ENCODE measurements at regions of chr3 and their contacts with region 1.

Region 1: DNA sequence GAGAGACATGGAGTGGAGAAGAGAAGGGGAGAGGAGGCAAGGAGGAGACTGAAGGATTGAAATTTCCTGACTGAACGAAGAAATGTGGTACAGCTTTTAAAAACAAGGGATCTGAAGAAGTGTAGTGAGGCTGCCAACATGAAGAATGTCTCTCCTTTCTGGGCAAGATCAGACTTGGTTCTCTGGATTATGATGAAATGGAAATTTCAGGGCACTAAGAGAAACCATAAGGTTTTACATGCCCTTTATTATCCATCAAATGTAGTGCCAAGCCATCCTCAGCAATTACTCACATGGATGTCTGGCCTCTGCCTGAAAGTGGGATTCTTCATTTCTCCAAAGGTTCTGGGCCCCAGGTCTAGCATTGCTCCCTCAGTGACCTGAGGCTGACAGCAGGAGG is 77.6 kb upstream of the CCDC80 start:
- DNase-seq: no peak
- H3K4me3 ChIP-seq: no peak overlapping the region
- H3K27ac ChIP-seq: no peak overlapping the region
- H3K4me1 ChIP-seq: no peaks in the 10 kb centered on the region
- H3K27me3 ChIP-seq: no peaks in the 10 kb centered on the region
- CTCF ChIP-seq: no peak
- POLR2A ChIP-seq: no peak

Region 2: DNA sequence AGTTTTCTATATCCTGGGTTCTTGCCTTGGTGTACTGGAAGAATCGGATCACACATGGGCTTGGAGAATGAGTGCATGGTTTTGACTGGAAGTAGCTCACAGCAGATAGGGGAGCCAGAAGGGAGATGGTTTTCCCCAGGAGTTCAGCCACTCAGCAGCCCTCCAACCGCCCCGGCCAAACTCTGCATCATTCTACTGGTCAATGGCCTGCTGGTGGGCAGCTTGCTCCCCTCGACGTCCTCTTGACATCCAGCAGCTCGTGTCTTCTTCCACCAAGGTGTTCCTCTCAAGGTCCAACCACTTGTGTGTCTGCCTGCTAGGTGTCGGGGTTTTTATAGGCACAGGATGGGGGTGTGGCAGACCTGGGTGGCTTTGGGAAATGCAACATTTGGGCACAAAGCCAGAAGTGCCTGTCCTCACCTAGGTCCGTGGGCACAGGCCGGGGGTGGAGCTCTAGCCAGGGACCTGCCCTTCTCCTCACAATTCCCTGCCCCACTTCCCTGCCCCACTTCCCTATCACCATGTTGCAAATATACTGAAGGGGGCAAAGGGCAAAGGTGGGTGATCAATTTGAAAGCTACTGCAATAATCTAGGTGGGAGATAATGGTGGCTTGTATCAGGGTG is 269.3 kb after region 1 on chr3:
- intact Hi-C with region 1: loop called (anchors 5 kb)
- DNase-seq: no peak
- H3K4me3 ChIP-seq: no peak overlapping the region
- H3K27ac ChIP-seq: no peak overlapping the region
- H3K4me1 ChIP-seq: peaks cover 0 to 9% of the 10 kb centered on the region in 2 donors
- H3K27me3 ChIP-seq: no peaks in the 10 kb centered on the region
- CTCF ChIP-seq: no peak
- POLR2A ChIP-seq: no peak

Region 3: GRCh38 chr3:113812854-113813253 is 1094.3 kb after region 1 on chr3:
- intact Hi-C with region 1: no loop called
- DNase-seq: no peak
- H3K4me3 ChIP-seq: no peak overlapping the region
- H3K27ac ChIP-seq: no peak overlapping the region
- H3K4me1 ChIP-seq: no peaks in the 10 kb centered on the region
- H3K27me3 ChIP-seq: no peaks in the 10 kb centered on the region
- CTCF ChIP-seq: no peak
- POLR2A ChIP-seq: no peak

Measured in breast epithelium (tissue), 4 donors.